Activated B cell treated with CpG ODN at 0.5 μM for 24 hours (primary cell): ENCODE measurements at regions of chr2 and their contacts with region 1.

Region 1: DNA sequence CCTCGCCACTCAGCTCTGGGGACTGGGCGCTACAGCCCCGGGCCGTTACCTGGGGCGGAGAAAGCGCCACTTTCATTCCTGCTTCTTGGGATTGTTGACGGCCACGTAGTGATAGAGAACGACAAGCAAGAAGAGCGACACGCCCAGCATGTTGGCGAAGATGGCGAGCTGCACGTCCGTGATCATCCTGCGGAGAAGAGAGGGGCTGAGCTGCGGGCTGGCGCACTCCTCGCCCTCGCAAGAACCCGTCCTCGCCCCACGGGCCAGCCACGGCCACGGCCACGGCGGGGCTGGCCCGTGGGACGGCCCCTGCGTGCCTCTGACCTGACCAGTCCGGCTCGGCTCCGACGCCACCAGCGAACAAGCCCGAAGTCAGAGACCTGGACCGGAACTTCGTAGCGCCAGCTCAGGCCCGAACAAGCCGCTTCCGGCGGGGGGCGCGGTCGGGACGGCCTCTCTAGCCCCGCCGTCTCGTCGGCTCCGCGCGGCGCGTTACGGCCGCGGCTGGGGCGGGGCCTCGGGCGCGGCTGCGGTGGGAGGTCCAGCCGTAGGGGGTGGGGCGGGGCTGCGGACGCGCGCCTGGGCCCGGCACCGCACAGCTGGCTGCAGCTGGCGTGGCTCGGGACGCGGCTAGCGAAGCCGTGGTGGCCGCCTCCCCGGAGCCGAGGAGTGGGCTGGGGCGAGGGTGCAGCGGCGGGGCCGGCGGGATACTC is at the start of gene OST4:
- DNase-seq: peak; percentile 92
- ATAC-seq: peak; percentile 96
- H3K4me3 Mint-ChIP-seq: peak within 1 kb of the TSS; percentile 97
- H3K27ac Mint-ChIP-seq: peak within 1 kb of the TSS; percentile 90
- H3K4me1 Mint-ChIP-seq: peaks cover 67% of the 10 kb centered on the region
- H3K27me3 Mint-ChIP-seq: no peaks in the 10 kb centered on the region
- CTCF ChIP-seq: no peak
- total RNA-seq, gene OST4: 243 and 265 TPM in 2 replicates

Region 2: GRCh38 chr2:26887151-26887550 is 184.3 kb before region 1 on chr2:
- CTCF ChIA-PET with region 1: no interaction called
- POLR2A ChIA-PET with region 1: no interaction called
- intact Hi-C with region 1: no loop called
- DNase-seq: no peak
- ATAC-seq: peak; percentile 52
- H3K4me3 Mint-ChIP-seq: no peak overlapping the region
- H3K27ac Mint-ChIP-seq: no peak overlapping the region
- H3K4me1 Mint-ChIP-seq: peaks cover 10% of the 10 kb centered on the region
- H3K27me3 Mint-ChIP-seq: peaks cover 11% of the 10 kb centered on the region
- CTCF ChIP-seq: no peak

Region 3: DNA sequence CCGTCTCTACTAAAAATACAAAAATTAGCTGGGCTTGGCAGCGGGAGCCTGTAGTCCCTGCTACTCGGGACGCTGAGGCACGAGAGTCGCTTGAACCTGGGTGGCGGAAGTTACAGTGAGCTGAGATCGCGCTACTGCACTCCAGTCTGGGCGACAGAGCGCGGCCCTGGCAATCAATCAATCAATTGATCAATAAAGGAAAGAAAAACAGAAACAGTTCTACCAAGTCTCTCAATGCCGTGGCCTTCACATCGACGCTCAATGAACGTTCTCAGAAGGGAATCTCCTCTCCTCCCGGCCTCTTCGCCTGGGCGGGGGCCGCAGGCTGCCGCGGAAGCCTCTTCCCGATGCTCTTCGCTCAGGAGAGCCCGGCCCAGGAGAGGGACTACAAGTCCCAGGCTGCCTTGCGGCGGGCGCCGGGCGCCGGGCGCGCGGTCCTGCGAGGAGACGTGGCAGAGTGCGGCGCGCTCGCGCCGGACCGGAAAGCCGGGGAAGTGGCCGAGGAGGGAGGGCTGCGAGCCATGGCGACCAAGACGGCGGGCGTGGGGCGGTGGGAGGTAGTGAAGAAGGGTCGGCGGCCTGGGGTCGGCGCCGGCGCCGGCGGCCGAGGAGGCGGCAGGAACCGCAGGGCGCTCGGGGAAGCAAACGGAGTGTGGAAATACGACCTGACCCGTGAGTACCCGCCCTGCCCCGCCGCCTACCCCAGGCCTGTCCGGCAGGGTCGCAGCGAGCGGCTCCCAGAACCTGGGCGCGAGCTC is 38.8 kb before region 1 on chr2 and contains the start of gene TMEM214:
- CTCF ChIA-PET with region 1: interaction called, 3 read pairs
- POLR2A ChIA-PET with region 1: interaction called, 9 read pairs
- intact Hi-C with region 1: loop called (anchors 1 kb)
- DNase-seq: peak; percentile 76
- ATAC-seq: peak; percentile 95
- H3K4me3 Mint-ChIP-seq: peak within 1 kb of the TSS; percentile 93
- H3K27ac Mint-ChIP-seq: peak within 1 kb of the TSS; percentile 80
- H3K4me1 Mint-ChIP-seq: peaks cover 32% of the 10 kb centered on the region
- H3K27me3 Mint-ChIP-seq: no peaks in the 10 kb centered on the region
- CTCF ChIP-seq: no peak
- total RNA-seq, gene TMEM214: 84.4 and 92.1 TPM in 2 replicates

Region 4: DNA sequence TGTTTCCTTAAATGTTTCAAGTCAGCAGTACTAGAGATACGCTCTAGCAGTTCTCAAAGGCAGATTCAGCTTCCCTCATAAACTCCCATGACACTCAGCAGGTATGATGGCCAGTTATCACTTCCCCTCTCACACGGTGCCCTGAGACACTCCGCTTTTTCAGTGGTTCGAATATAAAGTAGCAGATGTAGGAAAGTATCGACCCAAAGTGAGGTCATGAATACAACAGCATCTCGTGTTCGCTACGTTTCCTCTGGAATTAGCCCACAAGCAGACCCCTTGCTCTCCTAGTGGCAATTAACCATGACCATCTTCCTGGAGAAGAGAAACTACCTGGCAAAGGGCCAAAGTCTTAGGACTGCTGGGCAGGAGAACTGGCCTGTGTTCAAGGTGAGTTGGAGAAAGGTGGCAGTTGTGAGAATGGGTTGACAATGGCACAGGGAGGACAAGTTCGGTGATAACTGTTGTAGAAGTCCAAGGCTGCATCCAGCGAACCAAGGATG is 29.2 kb before region 1 on chr2:
- CTCF ChIA-PET with region 1: interaction called, 3 read pairs
- POLR2A ChIA-PET with region 1: interaction called, 14 read pairs
- intact Hi-C with region 1: no loop called
- DNase-seq: peak; percentile 21
- ATAC-seq: peak; percentile 97
- H3K4me3 Mint-ChIP-seq: peak overlapping the region; percentile 70
- H3K27ac Mint-ChIP-seq: peak overlapping the region; percentile 95
- H3K4me1 Mint-ChIP-seq: peaks cover 35% of the 10 kb centered on the region
- H3K27me3 Mint-ChIP-seq: no peaks in the 10 kb centered on the region
- CTCF ChIP-seq: no peak

Region 5: GRCh38 chr2:27059141-27059820 is 12.2 kb before region 1 on chr2:
- CTCF ChIA-PET with region 1: no interaction called
- POLR2A ChIA-PET with region 1: interaction called, 204 read pairs
- intact Hi-C with region 1: no loop called
- DNase-seq: no peak
- ATAC-seq: no peak
- H3K4me3 Mint-ChIP-seq: no peak overlapping the region
- H3K27ac Mint-ChIP-seq: no peak overlapping the region
- H3K4me1 Mint-ChIP-seq: no peaks in the 10 kb centered on the region
- H3K27me3 Mint-ChIP-seq: no peaks in the 10 kb centered on the region
- CTCF ChIP-seq: no peak

Region 6: DNA sequence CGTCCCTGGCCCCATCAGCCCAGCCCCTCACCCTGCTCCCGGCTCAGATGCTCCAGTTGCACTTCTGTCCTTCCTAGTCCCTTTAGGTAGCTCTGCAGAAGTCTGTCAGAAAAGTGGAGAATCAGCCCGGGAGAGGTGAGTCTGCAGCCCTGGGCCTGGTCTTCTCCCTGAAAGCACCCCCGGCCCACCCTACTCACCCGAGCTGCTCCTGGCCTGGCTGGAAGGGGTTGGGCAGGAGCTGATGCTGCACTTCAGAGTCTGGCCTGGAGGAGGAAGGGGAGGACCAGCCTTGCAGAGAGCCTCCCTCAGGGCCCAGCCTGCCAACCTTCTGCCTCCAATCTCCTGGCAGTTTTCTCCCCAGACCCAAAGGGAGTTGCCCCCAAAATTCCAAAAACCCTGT is 30.9 kb after region 1 on chr2:
- CTCF ChIA-PET with region 1: no interaction called
- POLR2A ChIA-PET with region 1: no interaction called
- intact Hi-C with region 1: no loop called
- DNase-seq: no peak
- ATAC-seq: no peak
- H3K4me3 Mint-ChIP-seq: no peak overlapping the region
- H3K27ac Mint-ChIP-seq: no peak overlapping the region
- H3K4me1 Mint-ChIP-seq: no peaks in the 10 kb centered on the region
- H3K27me3 Mint-ChIP-seq: peaks cover 6% of the 10 kb centered on the region
- CTCF ChIP-seq: no peak